Breast epithelium (tissue), 4 donors: ENCODE measurements at regions of chr11 and their contacts with region 1.

Region 1: GRCh38 chr11:75577207-75577606 is 15.2 kb downstream of the SERPINH1 start:
- DNase-seq: no peak
- H3K4me3 ChIP-seq: no peak overlapping the region
- H3K27ac ChIP-seq: peak overlapping the region in 1 of 2 donors; percentile 29
- H3K4me1 ChIP-seq: no peaks in the 10 kb centered on the region
- H3K27me3 ChIP-seq: no peaks in the 10 kb centered on the region
- CTCF ChIP-seq: no peak
- POLR2A ChIP-seq: no peak

Region 2: DNA sequence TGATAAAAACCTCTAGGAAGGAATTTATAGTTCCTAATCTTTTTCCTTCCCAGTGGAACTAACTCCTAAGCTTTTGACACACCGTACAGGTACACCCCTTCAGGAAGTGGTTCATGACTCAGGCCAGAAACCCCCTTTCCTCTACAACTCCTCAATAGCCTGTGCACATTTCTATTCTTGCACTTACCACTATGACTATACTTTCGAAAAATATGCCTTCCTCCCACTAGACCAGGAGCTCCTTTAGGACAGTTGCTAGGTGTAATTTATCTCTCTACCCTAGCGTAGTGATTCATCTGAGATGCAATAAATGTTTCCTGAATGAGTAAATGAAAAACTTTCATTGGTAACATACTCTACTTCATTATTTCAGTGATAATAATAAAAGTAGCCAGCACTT is 77.1 kb after region 1 on chr11:
- intact Hi-C with region 1: no loop called
- DNase-seq: no peak
- H3K4me3 ChIP-seq: no peak overlapping the region
- H3K27ac ChIP-seq: no peak overlapping the region
- H3K4me1 ChIP-seq: no peaks in the 10 kb centered on the region
- H3K27me3 ChIP-seq: no peaks in the 10 kb centered on the region
- CTCF ChIP-seq: no peak
- POLR2A ChIP-seq: no peak

Region 3: GRCh38 chr11:76194872-76195668 is 617.9 kb after region 1 on chr11:
- intact Hi-C with region 1: loop called (anchors 5 kb)
- DNase-seq: no peak
- H3K4me3 ChIP-seq: no peak overlapping the region
- H3K27ac ChIP-seq: no peak overlapping the region
- H3K4me1 ChIP-seq: no peaks in the 10 kb centered on the region
- H3K27me3 ChIP-seq: no peaks in the 10 kb centered on the region
- CTCF ChIP-seq: no peak
- POLR2A ChIP-seq: no peak